CD4-positive, alpha-beta memory T cell (primary cell): ENCODE measurements at regions of chr7 and their contacts with region 1.

Region 1: DNA sequence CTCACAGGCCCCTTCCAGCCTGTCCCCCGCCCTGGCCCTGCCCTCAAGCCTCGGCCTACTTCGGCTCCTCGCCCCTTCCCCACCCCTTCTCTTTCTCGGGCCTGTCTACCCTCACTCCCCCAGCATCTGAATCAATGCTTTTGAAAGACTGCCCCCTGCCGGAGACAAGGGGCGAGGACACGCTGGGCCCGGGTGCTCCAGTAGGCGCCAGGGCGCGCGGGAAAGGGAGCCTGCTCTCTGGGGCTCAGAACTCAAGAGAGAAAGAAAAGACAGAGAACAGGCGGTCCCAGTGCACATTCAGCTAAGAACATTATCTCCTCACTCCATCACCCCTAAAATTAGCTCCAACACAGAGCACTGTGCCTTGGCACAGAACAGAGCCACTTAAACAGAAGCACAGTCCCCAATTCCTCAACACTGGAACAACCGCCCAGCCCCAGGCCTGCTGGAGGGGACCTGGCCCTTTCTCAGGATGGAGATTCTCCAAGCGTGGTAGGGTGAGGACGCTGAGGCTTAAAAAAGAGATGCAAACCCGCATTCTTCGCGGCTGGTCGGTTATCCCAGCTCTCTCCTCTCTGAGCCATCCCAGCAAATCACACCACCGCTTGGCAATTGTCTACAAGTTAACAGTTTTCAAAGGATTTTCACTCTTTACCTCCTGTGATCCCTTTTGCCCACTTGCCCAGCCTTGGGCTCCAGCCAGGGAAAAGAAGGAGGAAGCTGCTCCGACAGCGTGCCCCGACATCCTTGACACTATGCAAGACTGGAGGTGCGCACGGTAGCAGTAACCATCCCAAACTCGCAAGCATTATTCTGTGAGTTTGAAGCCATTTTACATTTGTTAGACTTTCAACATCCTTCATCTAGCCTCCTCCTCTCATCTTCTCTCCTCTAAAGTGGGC is 2.1 kb downstream of the GIGYF1 start:
- DNase-seq: peak; percentile 73 to 80 (median 78)
- H3K4me3 ChIP-seq: peak overlapping the region in 1 of 2 donors; percentile 7
- H3K4me3 Mint-ChIP-seq: peak overlapping the region; percentile 88 to 96 (median 92)
- H3K27ac ChIP-seq: no peak overlapping the region
- H3K27ac Mint-ChIP-seq: peak overlapping the region; percentile 36 to 93 (median 79)
- H3K4me1 ChIP-seq: peaks cover 40% of the 10 kb centered on the region
- H3K4me1 Mint-ChIP-seq: peaks cover 23 to 51% (median 36%) of the 10 kb centered on the region in 4 donors
- H3K27me3 ChIP-seq: no peaks in the 10 kb centered on the region
- H3K27me3 Mint-ChIP-seq: no peaks in the 10 kb centered on the region

Region 2: GRCh38 chr7:100478966-100479665 is 212.8 kb before region 1 on chr7 and contains the start of gene TSC22D4:
- CTCF ChIA-PET with region 1: interaction called, 4 read pairs
- POLR2A ChIA-PET with region 1: interaction called, 5 read pairs
- intact Hi-C with region 1: loop called (anchors 2 kb)
- DNase-seq: peak; percentile 93 to 97 (median 95)
- H3K4me3 ChIP-seq: peak within 1 kb of the TSS; percentile 81 to 95
- H3K4me3 Mint-ChIP-seq: peak within 1 kb of the TSS; percentile 82 to 99 (median 98)
- H3K27ac ChIP-seq: peak within 1 kb of the TSS; percentile 75
- H3K27ac Mint-ChIP-seq: peak within 1 kb of the TSS; percentile 75 to 99 (median 94)
- H3K4me1 ChIP-seq: peaks cover 58% of the 10 kb centered on the region
- H3K4me1 Mint-ChIP-seq: peaks cover 28 to 57% (median 38%) of the 10 kb centered on the region in 4 donors
- H3K27me3 ChIP-seq: no peaks in the 10 kb centered on the region
- H3K27me3 Mint-ChIP-seq: no peaks in the 10 kb centered on the region
- total RNA-seq, gene TSC22D4: 144 to 154 TPM

Region 3: DNA sequence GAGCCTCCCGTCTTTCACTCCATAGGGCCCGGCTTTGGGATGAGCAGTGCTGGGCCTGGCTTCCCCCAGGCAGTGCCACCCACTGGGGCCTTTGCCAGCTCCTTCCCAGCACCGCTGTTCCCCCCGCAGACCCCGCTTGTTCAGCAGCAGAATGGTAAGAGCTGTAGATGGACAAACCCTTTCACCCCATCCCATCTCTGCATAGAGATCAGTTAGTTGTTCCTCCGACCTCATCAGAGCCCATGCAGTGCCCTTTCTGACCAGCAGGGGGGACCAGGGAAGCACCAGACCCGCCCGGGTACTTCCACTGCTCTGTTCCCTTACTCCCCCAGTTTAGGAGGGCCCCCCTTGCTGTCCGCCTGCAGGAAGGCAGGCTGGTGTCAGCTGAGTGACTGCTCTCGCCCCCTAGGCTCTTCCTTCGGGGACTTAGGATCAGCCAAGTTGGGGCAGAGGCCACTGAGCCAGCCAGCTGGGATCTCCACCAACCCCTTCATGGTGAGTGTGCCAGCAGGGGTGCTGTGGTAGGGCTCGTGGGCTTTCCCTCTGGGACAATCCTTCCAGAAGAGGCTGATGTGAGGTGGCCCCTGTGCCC is 128.0 kb before region 1 on chr7:
- CTCF ChIA-PET with region 1: interaction called, 81 read pairs
- POLR2A ChIA-PET with region 1: interaction called, 7 read pairs
- intact Hi-C with region 1: loop called (anchors 1 kb)
- DNase-seq: peak; percentile 74 to 80 (median 77)
- H3K4me3 ChIP-seq: no peak overlapping the region
- H3K4me3 Mint-ChIP-seq: no peak overlapping the region
- H3K27ac ChIP-seq: peak overlapping the region; percentile 32
- H3K27ac Mint-ChIP-seq: peak overlapping the region; percentile 39 to 84 (median 59)
- H3K4me1 ChIP-seq: peaks cover 29% of the 10 kb centered on the region
- H3K4me1 Mint-ChIP-seq: peaks cover 16 to 40% (median 29%) of the 10 kb centered on the region in 4 donors
- H3K27me3 ChIP-seq: no peaks in the 10 kb centered on the region
- H3K27me3 Mint-ChIP-seq: no peaks in the 10 kb centered on the region

Region 4: DNA sequence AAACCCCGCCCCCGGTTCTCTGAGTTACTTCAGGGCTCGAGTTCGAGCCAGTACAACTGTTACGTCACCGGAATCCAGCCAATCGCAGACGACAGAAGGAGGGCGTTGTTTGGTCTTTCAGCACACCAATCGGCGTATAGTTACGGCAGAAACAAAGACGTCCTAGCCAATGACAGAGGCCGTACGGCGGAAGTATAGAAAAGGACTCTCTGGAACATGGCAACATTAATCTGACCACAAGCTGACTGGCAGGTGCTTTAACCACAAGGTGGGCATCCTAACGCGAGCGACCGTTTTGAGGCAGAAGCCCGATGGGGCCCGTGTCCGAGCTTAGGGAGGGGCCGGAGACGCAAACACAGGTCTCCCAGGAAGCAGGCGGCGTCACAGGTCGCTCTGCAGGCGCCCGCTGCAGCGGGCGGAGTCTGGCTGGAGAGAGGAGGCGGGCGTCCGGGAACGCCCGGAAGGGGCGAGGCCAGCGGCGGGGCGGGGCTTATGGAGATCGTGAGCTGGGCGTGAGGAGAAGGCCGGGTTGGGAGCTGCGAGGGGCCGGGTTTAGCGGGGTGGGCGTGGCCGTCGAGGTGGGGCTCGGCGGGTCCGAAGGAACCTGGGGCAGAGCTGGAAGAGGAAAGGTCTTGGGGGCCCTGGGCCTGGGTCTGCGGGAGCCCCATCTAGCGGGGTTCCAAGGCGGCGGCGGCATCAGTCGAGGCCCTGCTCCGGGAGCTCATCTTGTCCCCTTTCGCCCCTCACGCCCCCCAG is 79.8 kb before region 1 on chr7 and contains the start of gene MOSPD3:
- CTCF ChIA-PET with region 1: interaction called, 31 read pairs
- POLR2A ChIA-PET with region 1: interaction called, 15 read pairs
- intact Hi-C with region 1: no loop called
- DNase-seq: peak; percentile 98 to 99 (median 98)
- H3K4me3 ChIP-seq: peak within 1 kb of the TSS; percentile 74 to 96
- H3K4me3 Mint-ChIP-seq: peak within 1 kb of the TSS; percentile 96 to 100 (median 98)
- H3K27ac ChIP-seq: peak within 1 kb of the TSS; percentile 85
- H3K27ac Mint-ChIP-seq: peak within 1 kb of the TSS; percentile 96 to 100 (median 100)
- H3K4me1 ChIP-seq: peaks cover 18% of the 10 kb centered on the region
- H3K4me1 Mint-ChIP-seq: peaks cover 14 to 32% (median 24%) of the 10 kb centered on the region in 4 donors
- H3K27me3 ChIP-seq: no peaks in the 10 kb centered on the region
- H3K27me3 Mint-ChIP-seq: no peaks in the 10 kb centered on the region
- total RNA-seq, gene MOSPD3: 13.4 to 15.6 TPM

Region 5: DNA sequence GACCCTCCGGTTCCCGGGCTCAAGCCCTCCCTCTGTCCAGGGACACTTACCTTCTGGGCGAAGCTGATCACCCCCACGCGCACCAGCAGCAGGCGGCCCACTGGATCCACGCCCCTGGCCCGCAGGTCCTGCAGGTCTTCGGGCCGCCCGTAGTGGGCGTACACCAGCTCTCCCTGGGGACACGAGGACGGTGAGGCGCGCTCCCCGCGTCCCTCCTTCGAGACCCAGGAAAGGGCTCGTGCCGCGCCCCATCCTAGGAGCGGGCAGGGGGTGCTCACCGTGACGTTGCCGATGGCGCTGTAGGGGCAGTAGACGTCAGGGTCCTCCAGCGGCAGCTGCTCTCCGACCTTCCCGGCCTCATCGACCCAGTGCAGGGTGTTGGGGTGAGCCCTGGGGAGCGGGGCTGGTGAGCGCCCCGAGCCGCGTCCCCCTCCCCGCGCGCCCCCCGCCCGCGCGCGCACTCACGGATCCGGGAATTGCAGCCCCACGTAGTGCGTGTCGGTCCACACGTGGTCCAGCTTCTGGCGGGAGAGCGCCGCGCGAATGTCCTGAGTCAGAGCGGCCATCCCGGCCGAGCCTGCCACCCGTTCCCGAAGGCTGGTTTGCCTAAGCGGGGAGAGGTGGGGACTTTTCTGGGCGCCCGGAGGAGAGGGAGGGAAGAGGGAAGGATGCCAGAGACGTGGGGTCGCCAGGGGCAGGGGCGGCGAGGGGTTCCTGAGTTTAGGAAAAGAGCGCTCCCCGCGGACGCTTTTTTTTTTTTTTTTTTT is 58.8 kb before region 1 on chr7:
- CTCF ChIA-PET with region 1: interaction called, 53 read pairs
- POLR2A ChIA-PET with region 1: interaction called, 40 read pairs
- intact Hi-C with region 1: loop called (anchors 1 kb)
- DNase-seq: peak; percentile 45 to 66 (median 55)
- H3K4me3 ChIP-seq: peak overlapping the region; percentile 22 to 68
- H3K4me3 Mint-ChIP-seq: peak overlapping the region; percentile 76 to 89 (median 85)
- H3K27ac ChIP-seq: peak overlapping the region; percentile 58
- H3K27ac Mint-ChIP-seq: peak overlapping the region in 6 of 7 donors; percentile 42 to 91 (median 76)
- H3K4me1 ChIP-seq: peaks cover 8% of the 10 kb centered on the region
- H3K4me1 Mint-ChIP-seq: peaks cover 10 to 26% (median 18%) of the 10 kb centered on the region in 4 donors
- H3K27me3 ChIP-seq: no peaks in the 10 kb centered on the region
- H3K27me3 Mint-ChIP-seq: no peaks in the 10 kb centered on the region

Region 6: GRCh38 chr7:100673300-100673941 is 18.5 kb before region 1 on chr7 and contains the start of gene GNB2:
- CTCF ChIA-PET with region 1: interaction called, 88 read pairs
- POLR2A ChIA-PET with region 1: interaction called, 42 read pairs
- intact Hi-C with region 1: loop called (anchors 1 kb)
- DNase-seq: peak; percentile 97 to 98 (median 97)
- H3K4me3 ChIP-seq: peak within 1 kb of the TSS; percentile 80 to 91
- H3K4me3 Mint-ChIP-seq: peak within 1 kb of the TSS; percentile 94 to 99 (median 96)
- H3K27ac ChIP-seq: peak within 1 kb of the TSS; percentile 92
- H3K27ac Mint-ChIP-seq: peak within 1 kb of the TSS; percentile 96 to 99 (median 97)
- H3K4me1 ChIP-seq: peaks cover 30% of the 10 kb centered on the region
- H3K4me1 Mint-ChIP-seq: peaks cover 3 to 33% (median 14%) of the 10 kb centered on the region in 4 donors
- H3K27me3 ChIP-seq: no peaks in the 10 kb centered on the region
- H3K27me3 Mint-ChIP-seq: peaks cover 0 to 1% of the 10 kb centered on the region in 2 donors
- total RNA-seq, gene GNB2: 138 to 144 TPM

Region 7: GRCh38 chr7:100726996-100727761 is 35.3 kb after region 1 on chr7:
- CTCF ChIA-PET with region 1: interaction called, 3 read pairs
- POLR2A ChIA-PET with region 1: no interaction called
- intact Hi-C with region 1: loop called (anchors 1 kb)
- DNase-seq: no peak
- H3K4me3 ChIP-seq: no peak overlapping the region
- H3K4me3 Mint-ChIP-seq: no peak overlapping the region
- H3K27ac ChIP-seq: no peak overlapping the region
- H3K27ac Mint-ChIP-seq: no peak overlapping the region
- H3K4me1 ChIP-seq: peaks cover 5% of the 10 kb centered on the region
- H3K4me1 Mint-ChIP-seq: peaks cover 0 to 4% (median 3%) of the 10 kb centered on the region in 4 donors
- H3K27me3 ChIP-seq: no peaks in the 10 kb centered on the region
- H3K27me3 Mint-ChIP-seq: peaks cover 12 to 22% of the 10 kb centered on the region in 2 donors

Region 8: DNA sequence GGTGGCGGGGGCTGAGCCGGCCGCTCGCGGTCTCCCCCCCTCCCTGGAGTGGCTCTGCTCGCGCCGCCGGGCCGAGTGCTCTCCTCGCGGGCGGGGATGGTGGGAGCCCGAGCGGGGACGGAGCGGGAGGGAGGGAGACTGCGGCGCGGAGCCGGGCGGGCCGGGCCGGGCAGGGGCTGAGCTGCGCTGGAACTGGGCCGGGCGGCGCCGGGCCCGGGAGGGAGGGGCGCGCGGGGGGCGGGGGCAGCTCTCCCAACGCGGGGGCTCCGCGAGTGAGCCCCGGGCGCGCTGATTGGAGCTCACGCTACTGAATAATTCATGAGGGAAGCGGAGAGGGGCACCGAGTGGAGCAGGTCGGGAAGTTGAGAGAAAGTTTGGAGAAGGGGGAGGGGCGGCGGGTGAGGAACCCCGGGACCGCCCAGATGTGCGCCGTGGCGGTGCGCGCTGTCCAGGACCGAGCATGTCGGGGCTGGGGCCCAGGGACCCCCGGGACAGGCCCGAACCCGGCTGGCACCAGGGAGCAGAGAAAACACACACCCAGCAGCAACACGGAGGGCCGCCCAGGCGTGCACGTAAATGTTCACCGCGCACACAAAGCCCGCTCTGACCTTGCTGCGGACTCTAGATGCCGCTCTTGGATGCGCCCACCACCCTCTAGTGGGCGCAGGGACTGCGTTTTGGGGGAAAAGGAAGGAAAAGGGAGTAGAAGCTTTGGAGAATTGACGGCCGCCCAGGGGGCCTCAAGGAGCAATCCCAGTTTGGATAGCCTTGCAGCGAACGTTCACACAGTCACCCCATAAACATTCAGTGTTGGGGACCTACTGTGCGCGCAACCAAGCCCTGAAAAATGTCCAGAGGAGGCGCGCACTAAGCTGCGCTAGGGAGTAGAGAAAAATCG is 135.7 kb after region 1 on chr7 and contains the start of gene EPHB4:
- CTCF ChIA-PET with region 1: no interaction called
- POLR2A ChIA-PET with region 1: no interaction called
- intact Hi-C with region 1: no loop called
- DNase-seq: no peak
- H3K4me3 ChIP-seq: peak within 1 kb of the TSS in 1 of 2 donors; percentile 57
- H3K4me3 Mint-ChIP-seq: peak within 1 kb of the TSS; percentile 68 to 89 (median 77)
- H3K27ac ChIP-seq: no peak within 1 kb of the TSS
- H3K27ac Mint-ChIP-seq: peak within 1 kb of the TSS in 3 of 7 donors; percentile 8 to 53 (median 48)
- H3K4me1 ChIP-seq: peaks cover 13% of the 10 kb centered on the region
- H3K4me1 Mint-ChIP-seq: peaks cover 14 to 25% (median 21%) of the 10 kb centered on the region in 4 donors
- H3K27me3 ChIP-seq: peaks cover 4% of the 10 kb centered on the region
- H3K27me3 Mint-ChIP-seq: peaks cover 25 to 30% of the 10 kb centered on the region in 2 donors
- total RNA-seq, gene EPHB4: 3.3 to 5.2 TPM